ENCODE measurements at regions of chr1 and their contacts with region 1.

Region 1: GRCh38 chr1:156198831-156199349 is 5.0 kb downstream of the SLC25A44 start:
- DNase-seq: no peak
- H3K4me3 Mint-ChIP-seq: no peak overlapping the region
- H3K27ac Mint-ChIP-seq: peak overlapping the region; percentile 81
- H3K4me1 Mint-ChIP-seq: peaks cover 64% of the 10 kb centered on the region
- H3K27me3 Mint-ChIP-seq: no peaks in the 10 kb centered on the region

Region 2: GRCh38 chr1:156126043-156126700 is 72.7 kb before region 1 on chr1:
- CTCF ChIA-PET with region 1: no interaction called
- POLR2A ChIA-PET with region 1: no interaction called
- DNase-seq: peak; percentile 62
- H3K4me3 Mint-ChIP-seq: peak overlapping the region; percentile 34
- H3K27ac Mint-ChIP-seq: peak overlapping the region; percentile 57
- H3K4me1 Mint-ChIP-seq: peaks cover 79% of the 10 kb centered on the region
- H3K27me3 Mint-ChIP-seq: peaks cover 4% of the 10 kb centered on the region

Region 3: GRCh38 chr1:156212833-156213643 is 14.1 kb after region 1 on chr1 and contains the start of gene PMF1:
- CTCF ChIA-PET with region 1: interaction called, 30 read pairs
- POLR2A ChIA-PET with region 1: interaction called, 8 read pairs
- DNase-seq: peak; percentile 98
- H3K4me3 Mint-ChIP-seq: peak within 1 kb of the TSS; percentile 90
- H3K27ac Mint-ChIP-seq: peak within 1 kb of the TSS; percentile 98
- H3K4me1 Mint-ChIP-seq: peaks cover 50% of the 10 kb centered on the region
- H3K27me3 Mint-ChIP-seq: no peaks in the 10 kb centered on the region
- total RNA-seq, gene PMF1: 72.8 to 73.4 TPM